ENCODE measurements at regions of chr19 and their contacts with region 1.

Region 1: DNA sequence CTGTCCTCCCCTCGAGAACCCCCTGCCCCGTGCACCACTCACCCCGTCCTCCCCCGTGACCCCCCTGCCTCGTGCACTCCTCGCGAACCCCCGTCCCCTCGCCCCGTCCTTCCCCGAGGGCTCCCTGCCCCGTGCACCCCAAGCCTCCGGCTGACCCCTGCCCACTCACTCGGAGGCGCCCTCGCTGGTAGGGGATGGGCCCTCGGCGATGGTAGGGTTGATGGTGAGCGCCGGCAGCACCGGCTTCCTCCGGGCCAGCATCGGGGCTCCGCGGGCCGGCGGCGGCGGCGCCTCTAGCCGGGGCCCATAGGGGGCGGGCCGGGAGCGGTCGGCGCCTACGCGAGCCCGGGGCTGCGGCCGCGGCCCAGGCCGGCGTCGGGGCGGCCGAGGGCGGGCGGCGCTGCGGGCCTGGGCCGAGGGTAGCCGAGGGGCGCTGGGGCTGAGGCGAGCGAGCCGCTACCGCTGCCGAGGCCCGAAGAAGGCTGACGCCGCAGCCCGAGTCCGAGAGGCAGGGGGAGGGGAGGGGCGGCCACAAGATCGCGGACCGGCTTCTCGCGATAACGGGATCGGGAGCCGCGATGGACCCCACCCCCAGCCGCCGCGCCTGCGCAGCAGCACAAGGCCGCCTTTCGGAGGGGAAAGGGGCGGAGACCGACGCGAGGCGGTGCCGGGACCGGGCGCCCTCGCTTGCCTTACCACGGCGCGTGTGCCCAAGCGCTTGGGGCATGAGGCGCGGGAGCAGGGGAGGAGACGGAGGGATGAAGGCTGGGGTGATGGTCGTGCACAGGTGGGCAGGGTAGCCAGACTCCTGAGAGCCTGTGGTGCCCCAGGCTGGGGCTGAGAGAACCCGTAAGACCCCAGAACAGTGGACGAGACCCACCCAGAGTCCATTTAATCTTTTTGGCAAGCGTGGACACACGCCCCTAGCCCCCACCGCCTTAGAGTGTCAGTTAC is at the start of gene MAP2K2:
- DNase-seq: peak; percentile 89 to 99 (median 97)

Region 2: DNA sequence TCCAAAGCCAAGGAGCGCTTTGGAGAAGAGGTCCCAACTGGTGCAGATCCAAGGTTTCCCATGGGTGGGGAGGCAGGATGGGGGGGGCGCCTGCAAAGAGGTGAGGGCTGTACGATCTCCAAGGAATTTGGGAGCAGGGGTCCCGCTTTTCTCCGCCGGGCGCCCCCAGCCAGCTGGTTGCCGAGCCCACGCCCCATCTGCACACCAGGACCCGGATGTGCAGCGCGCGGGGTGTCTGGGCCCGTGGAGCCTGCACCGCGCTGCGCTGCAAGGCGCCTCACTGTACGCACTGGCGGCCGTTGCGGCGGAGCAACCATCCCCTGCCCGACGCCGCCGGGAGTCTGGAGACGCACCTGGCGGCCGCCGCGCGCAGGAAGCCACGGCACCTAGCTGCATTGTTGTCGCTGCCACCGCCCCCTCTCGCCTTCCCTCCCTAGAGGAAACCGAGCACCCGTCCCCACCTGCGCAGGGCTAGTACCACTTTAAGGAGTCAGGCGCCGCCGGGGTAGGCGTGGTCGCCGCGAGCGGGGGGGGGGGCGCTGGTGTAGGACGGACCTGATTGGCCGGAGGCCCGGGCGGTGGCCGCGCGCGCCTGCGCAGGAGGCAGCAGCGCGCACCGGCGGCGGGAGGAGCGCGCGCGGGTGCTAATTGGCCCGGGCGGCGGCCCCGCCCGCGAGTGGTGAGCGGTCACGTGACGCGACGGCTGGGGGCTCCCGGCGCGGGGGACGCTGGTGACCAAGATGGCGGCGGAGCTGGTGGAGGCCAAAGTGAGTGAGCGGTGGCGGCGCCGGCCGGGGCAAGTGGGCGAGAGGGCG is 116.7 kb before region 1 on chr19 and contains the start of gene PIAS4:
- intact Hi-C with region 1: loop called (anchors 5 kb)
- DNase-seq: peak; percentile 88 to 98 (median 95)

Region 3: DNA sequence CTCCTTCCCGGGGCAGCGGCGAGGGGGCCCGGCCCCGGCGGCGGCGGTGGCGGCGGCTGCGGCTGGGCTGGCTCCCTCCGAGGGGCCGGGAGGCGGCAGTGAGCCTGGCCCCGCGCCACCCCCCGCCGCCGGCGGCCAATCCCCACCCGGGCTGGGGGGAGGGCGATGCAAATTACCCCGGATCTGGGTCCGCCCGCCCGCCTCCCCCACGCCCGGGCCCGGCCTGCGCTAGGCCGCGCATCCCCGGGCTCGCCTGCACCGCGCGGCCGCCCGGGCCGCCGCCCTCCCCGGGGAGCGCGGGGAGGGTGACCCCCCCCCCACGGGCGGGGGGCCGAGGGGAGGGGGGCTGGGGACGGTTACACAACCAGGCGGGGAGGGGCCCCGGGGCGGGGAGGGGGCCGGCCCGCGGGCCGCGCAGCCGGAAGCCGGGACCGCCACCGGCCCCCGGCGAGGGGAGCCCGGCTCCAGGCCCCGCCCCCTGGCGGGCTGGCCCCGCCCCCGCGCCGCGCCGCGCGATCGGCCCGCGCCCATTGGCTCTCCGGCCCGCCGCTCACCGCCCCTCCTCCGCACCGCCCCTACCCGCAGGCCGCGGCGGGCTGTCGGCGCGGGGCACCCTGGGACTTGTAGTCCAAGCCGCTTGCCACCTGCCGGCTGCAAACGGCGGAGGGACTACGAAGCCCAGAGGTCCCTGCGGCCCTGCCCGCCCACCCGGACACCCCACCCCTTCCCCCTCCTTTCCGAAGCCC is 58.3 kb before region 1 on chr19:
- intact Hi-C with region 1: loop called (anchors 5 kb)
- DNase-seq: peak; percentile 84 to 99 (median 97)

Region 4: GRCh38 chr19:4182084-4182810 is 58.4 kb after region 1 on chr19 and contains the starts of genes ANKRD24 and SIRT6:
- intact Hi-C with region 1: loop called (anchors 5 kb)
- DNase-seq: peak; percentile 84 to 99 (median 97)

Measured in head of caudate nucleus (tissue), 42 donors.